ENCODE measurements at regions of chr17 and their contacts with region 1.

Region 1: GRCh38 chr17:56715613-56716357 is 117.9 kb downstream of the C17orf67 start:
- DNase-seq: peak; percentile 84

Region 2: GRCh38 chr17:55845385-55845784 is 870.4 kb before region 1 on chr17:
- intact Hi-C with region 1: loop called (anchors 10 kb)
- DNase-seq: peak; percentile 78

Region 3: DNA sequence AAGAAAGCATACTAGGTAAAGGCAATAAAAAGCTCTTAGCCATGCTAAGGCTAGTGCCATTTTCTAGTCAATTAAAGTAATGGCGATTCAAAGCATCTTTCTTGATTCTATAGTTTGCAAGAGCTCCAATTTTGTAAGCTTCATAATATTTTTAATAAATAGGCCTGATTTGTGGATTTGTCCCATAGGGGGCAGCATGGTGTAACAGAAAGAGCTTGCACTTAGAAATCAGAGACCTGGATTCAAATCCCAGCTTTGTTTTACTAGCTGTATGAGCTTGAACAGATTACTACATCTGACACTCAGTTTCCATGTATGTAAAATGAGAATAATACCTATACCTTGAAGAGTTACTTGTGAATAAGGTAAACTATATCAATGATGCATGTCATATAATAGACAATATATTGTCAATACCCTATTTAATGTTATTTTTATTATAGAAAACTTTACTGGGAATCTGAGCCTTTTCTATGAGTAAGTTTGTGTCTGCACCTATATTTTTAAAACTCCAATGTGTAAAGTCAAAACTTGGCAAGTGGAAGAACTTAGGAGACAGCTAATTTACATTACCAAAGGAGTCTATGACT is 215.9 kb before region 1 on chr17:
- intact Hi-C with region 1: loop called (anchors 10 kb)
- DNase-seq: no peak

Region 4: DNA sequence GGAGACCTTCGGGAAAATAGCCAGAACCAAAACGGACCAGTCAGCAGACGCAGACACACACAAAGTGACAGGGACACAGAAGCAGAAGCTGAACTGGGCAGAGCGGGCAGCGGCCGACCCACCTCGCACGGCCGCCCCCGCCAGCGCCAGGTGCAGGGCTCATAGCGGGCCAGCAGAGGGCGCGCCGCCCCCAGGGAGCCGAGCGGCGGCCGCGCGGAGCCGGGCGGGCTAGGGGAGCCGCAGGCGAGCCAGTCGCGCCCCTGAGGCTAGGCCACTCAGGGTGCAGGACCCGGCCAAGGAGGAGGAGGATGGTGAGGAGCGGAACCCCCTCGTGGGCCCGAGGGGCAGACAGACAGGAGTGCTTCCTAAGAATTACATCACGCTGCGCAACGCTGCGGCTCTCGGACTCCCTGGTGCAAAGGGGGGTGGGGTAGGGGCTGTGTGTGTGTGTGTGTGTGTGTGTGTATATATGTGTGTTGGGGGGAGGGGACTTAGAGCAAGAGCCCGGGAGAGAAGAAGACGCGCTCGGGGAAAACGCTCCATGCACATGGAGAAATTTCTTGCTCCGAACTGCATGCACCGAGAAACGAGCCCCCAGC is 123.2 kb before region 1 on chr17:
- intact Hi-C with region 1: loop called (anchors 1 kb)
- DNase-seq: no peak

Measured in cardiac septum (tissue), 1 donor.